PC-9 (cell line): ENCODE measurements at regions of chr9 and their contacts with region 1.

Region 1: GRCh38 chr9:73565833-73566465 is 414.3 kb downstream of the ANXA1 start:
- DNase-seq: peak in 1 of 2 experiments; percentile 7
- H3K4me3 ChIP-seq: no peak overlapping the region
- H3K27ac ChIP-seq: no peak overlapping the region
- H3K4me1 ChIP-seq: no peaks in the 10 kb centered on the region
- H3K27me3 ChIP-seq: no peaks in the 10 kb centered on the region
- CTCF ChIP-seq: peak; percentile 50

Region 2: DNA sequence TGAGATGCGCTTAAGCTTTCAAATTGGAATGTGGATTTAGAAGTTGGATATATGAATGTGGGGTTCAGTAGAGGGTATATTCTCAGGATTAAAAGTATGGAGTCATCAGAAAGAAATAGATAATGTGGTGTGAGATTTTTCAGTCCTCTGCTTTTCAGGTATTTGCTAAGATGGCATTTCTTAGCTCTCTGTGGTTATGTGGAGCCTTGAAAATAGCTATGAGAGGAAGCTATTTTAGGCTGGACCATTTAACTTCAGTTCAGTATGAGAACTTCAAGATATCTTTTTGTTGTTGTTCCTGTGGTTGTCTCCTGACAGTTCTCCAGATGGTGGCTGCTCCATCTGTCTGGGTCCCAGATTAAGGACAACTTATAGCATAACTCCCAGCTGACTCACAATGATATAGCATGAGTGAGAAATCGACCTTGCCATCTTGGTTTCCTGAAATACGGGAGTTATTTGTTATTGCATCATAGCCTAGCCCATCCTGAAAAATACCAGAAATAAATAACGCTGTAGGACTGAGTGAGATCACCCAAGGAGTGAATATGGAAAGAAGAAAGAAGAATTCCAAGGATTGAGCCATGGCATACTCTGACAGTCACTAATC is 47.2 kb after region 1 on chr9:
- CTCF ChIA-PET with region 1: no interaction called
- POLR2A ChIA-PET with region 1: no interaction called
- intact Hi-C with region 1: loop called (anchors 10 kb)
- DNase-seq: no peak
- H3K4me3 ChIP-seq: no peak overlapping the region
- H3K27ac ChIP-seq: no peak overlapping the region
- H3K4me1 ChIP-seq: 0 out of 2 replicates have a peak, but pooled peaks cover 7% of the 10 kb centered on the region
- H3K27me3 ChIP-seq: no peaks in the 10 kb centered on the region
- CTCF ChIP-seq: no peak